ENCODE measurements at regions of chr4 and their contacts with region 1.

Region 1: DNA sequence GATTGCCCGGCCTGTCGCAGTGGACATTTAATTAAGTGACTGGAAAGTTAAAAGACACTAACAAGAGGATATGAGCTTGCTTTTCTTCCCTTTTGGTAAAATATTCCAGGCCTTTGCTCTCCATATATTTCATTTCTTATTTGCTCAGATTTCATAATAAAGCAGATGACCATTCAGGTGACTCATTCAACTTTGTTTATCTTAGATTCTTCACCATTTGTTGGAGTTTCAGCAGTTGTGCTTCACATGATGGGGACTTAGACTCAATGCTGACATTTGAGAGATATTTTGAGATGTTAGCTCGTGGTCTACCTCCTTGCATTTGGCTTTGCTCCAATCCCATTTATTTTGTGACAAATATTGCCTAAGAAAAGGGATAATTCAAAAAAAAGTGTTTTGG is 312.2 kb downstream of the ARHGAP24 start:
- DNase-seq: peak; percentile 86
- ATAC-seq: peak; percentile 76
- H3K4me3 ChIP-seq: 0 out of 2 replicates have a peak overlapping the region, but pooled peaks have one; percentile 13
- H3K27ac ChIP-seq: peak overlapping the region; percentile 95
- H3K4me1 ChIP-seq: peaks cover 48% of the 10 kb centered on the region
- H3K27me3 ChIP-seq: no peaks in the 10 kb centered on the region
- CTCF ChIP-seq: no peak

Region 2: DNA sequence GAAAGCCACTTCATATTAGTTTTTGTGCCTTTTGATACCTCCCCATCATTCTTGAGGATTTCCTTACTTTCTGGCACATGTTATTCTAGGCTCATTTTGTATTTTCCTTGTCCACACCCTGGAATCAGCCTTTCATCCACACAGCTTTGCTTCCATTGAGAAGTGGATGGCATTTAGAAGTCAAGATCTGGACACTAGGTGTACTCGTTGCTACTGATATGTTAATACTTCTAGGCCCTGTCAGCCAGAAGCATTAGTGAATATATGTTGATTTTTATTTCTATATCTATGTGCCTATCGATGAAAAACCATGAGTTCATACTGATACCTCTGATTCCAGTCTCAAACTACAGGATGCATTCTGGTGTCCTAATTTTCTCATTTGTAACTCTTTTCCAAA is 239.0 kb before region 1 on chr4:
- CTCF ChIA-PET with region 1: no interaction called
- POLR2A ChIA-PET with region 1: no interaction called
- intact Hi-C with region 1: no loop called
- DNase-seq: no peak
- ATAC-seq: peak; percentile 55; the same call in 1 of the 2 replicates
- H3K4me3 ChIP-seq: no peak overlapping the region
- H3K27ac ChIP-seq: no peak overlapping the region
- H3K4me1 ChIP-seq: no peaks in the 10 kb centered on the region
- H3K27me3 ChIP-seq: no peaks in the 10 kb centered on the region
- CTCF ChIP-seq: no peak

Region 3: GRCh38 chr4:85953651-85954018 is 166.5 kb after region 1 on chr4:
- CTCF ChIA-PET with region 1: no interaction called
- POLR2A ChIA-PET with region 1: no interaction called
- intact Hi-C with region 1: loop called (anchors 5 kb)
- DNase-seq: peak; percentile 81
- ATAC-seq: peak; percentile 89
- H3K4me3 ChIP-seq: peak overlapping the region; percentile 23; the same call in 1 of the 2 replicates
- H3K27ac ChIP-seq: peak overlapping the region; percentile 94
- H3K4me1 ChIP-seq: peaks cover 32% of the 10 kb centered on the region
- H3K27me3 ChIP-seq: no peaks in the 10 kb centered on the region
- CTCF ChIP-seq: no peak